T-cell (primary cell): ENCODE measurements at regions of chr6 and their contacts with region 1.

Region 1: DNA sequence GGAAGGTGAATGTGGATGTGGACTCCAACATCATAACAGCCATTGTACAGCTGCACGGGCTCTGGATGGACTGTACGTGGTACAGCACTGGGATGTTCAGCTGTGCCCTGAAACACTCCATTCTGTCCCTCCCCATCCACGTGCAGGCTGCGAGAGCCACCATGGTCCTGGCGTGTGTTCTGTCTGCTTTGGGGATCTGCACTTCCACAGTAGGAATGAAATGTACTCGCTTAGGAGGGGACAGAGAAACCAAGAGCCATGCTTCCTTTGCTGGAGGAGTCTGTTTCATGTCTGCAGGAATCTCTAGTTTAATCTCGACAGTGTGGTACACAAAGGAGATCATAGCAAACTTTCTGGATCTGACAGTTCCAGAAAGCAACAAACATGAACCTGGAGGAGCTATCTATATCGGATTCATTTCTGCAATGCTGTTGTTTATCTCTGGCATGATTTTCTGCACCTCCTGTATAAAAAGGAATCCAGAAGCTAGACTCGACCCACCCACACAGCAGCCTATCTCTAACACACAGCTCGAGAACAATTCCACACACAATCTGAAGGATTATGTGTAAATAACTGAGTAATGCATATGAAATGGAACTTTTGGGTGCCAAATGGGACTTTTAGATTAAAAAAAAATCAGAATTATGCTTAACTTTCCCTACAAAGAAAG is 12.1 kb downstream of the CLDN20 start:
- DNase-seq: no peak
- ATAC-seq: no peak
- H3K4me3 ChIP-seq: no peak overlapping the region
- H3K4me3 Mint-ChIP-seq: no peak overlapping the region
- H3K27ac ChIP-seq: no peak overlapping the region
- H3K27ac Mint-ChIP-seq: peak overlapping the region in 1 of 2 donors; percentile 11
- H3K4me1 ChIP-seq: no peaks in the 10 kb centered on the region
- H3K4me1 Mint-ChIP-seq: peaks cover 14 to 31% (median 16%) of the 10 kb centered on the region in 3 donors
- H3K27me3 ChIP-seq: no peaks in the 10 kb centered on the region
- H3K27me3 Mint-ChIP-seq: no peaks in the 10 kb centered on the region

Region 2: GRCh38 chr6:155154158-155154830 is 121.7 kb before region 1 on chr6:
- CTCF ChIA-PET with region 1: interaction called in 1 of 2 experiments, 10 read pairs
- POLR2A ChIA-PET with region 1: no interaction called
- DNase-seq: no peak
- ATAC-seq: peak in 1 of 4 experiments; percentile 16
- H3K4me3 ChIP-seq: no peak overlapping the region
- H3K4me3 Mint-ChIP-seq: peak overlapping the region in 1 of 3 donors; percentile 39
- H3K27ac ChIP-seq: no peak overlapping the region
- H3K27ac Mint-ChIP-seq: peak overlapping the region in 1 of 2 donors; percentile 2
- H3K4me1 ChIP-seq: peaks cover 6 to 9% of the 10 kb centered on the region in 2 experiments
- H3K4me1 Mint-ChIP-seq: peaks cover 17 to 38% (median 22%) of the 10 kb centered on the region in 3 donors
- H3K27me3 ChIP-seq: no peaks in the 10 kb centered on the region
- H3K27me3 Mint-ChIP-seq: no peaks in the 10 kb centered on the region